Dendritic cell treated with granulocyte-macrophage colony-stimulating factor and Interleukin-4, amounts not matched to agents 40 ng/mL and 50 ng/mL, for 4 days (primary cell): ENCODE measurements at regions of chr1 and their contacts with region 1.

Region 1: GRCh38 chr1:86470859-86471258 is 2.1 kb downstream of the CLCA1 start:
- H3K4me3 Mint-ChIP-seq: no peak overlapping the region
- H3K27ac Mint-ChIP-seq: no peak overlapping the region
- H3K4me1 Mint-ChIP-seq: peaks cover 23% of the 10 kb centered on the region
- H3K27me3 Mint-ChIP-seq: no peaks in the 10 kb centered on the region

Region 2: DNA sequence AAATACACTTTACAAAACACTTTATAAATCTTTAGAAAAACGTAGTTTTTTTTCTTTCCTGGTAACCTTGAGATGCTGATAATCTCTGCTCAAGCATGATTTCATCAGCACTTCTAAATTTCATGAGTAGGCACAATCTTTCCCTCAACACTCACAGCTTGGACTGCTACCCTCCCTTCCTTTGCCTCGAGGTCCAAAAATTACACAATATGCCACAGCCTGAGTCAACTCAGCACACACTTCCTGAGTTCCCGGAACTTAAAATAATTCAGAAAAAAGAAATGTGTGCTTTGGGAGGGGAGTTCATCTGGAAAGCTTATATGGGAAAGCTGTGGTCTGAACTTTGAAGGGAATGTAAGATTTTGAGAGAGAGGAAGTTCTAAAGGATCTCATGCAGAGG is 41.0 kb before region 1 on chr1:
- intact Hi-C with region 1: loop called (anchors 5 kb)
- H3K4me3 Mint-ChIP-seq: no peak overlapping the region
- H3K27ac Mint-ChIP-seq: no peak overlapping the region
- H3K4me1 Mint-ChIP-seq: no peaks in the 10 kb centered on the region
- H3K27me3 Mint-ChIP-seq: peaks cover 2% of the 10 kb centered on the region